ENCODE measurements at regions of chr7 and their contacts with region 1.

Region 1: GRCh38 chr7:7719236-7719635 is 829 bp upstream of the RPA3 start:
- DNase-seq: peak; percentile 77
- H3K4me3 Mint-ChIP-seq: no peak overlapping the region
- H3K27ac Mint-ChIP-seq: peak overlapping the region; percentile 63
- H3K4me1 Mint-ChIP-seq: peaks cover 19% of the 10 kb centered on the region
- H3K27me3 Mint-ChIP-seq: no peaks in the 10 kb centered on the region

Region 2: DNA sequence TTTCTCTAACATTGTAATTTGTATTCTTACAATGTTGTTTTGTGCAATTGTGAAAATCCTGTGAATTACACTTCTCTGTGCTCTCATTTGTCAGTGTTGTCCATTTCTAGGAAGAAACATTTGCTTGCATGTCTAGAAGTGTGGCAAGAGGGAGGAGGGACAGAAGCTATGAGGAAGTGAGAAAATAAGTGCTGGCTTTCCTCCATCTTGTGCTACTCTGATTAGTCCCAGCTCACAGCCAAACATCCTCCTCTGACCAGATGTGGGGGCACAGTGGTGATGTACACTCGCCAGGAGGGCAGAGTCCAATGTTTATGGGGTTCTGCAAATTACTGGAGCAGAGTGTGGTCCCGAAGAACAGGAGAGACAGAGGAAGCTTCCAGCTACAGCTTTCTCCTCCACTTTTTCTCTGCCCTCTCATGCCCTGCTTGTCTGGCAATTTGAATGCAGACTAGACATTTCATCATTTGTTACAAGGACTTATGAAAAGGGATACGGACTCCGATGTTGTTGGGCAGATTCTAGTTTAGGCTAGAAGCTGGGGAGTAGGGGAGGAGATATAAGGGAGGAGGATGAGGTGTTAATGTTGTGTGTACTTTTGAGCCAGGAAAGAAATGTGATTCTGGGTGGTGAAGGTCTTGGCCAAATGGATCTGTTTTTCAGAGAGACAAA is 667.9 kb before region 1 on chr7:
- CTCF ChIA-PET with region 1: no interaction called
- intact Hi-C with region 1: no loop called
- DNase-seq: no peak
- H3K4me3 Mint-ChIP-seq: no peak overlapping the region
- H3K27ac Mint-ChIP-seq: no peak overlapping the region
- H3K4me1 Mint-ChIP-seq: no peaks in the 10 kb centered on the region
- H3K27me3 Mint-ChIP-seq: no peaks in the 10 kb centered on the region

Region 3: DNA sequence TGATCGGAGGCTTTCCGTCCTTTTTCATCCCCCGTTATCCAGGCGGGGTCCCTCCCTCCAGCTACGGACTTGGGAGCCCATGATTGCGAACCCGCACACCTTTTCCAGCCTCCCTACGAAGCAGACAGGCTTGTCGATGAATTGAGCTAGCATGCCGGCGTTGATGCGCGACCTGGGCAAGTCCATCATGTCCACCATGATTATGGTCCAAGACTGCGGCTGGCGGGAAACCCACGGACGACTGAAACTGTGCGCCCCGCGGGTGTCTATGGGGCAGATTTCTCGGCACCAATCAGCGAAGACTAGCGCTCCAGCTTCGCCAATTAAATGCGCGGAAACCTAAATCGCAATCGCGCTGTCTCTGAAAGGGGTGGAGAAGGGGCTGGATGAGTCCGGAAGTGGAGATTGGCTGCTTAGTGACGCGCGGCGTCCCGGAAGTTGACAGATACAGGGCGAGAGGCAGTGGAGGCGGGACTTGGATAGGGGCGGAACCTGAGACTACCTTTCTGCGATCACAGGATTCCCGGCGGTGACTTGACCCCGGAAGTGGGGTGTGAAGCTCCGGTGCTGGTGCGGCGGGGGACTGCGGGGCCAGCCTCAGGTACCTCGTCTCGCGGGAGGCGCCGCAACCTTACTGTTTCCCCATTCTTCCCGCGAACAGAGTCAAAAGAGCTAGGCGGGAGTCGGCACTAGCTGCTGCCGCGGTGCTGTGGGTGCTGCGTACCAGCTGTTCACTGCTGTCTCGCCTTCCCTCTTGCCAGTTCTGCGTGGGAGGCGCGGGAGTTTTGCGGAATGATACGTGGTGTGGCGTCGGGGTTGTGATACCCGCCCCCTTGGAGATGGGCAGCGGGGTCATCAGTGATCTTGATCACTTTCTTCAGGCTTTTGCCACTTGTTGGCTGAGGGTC is 78.8 kb before region 1 on chr7 and contains the start of gene UMAD1:
- CTCF ChIA-PET with region 1: no interaction called
- intact Hi-C with region 1: loop called (anchors 1 kb)
- DNase-seq: peak; percentile 99
- H3K4me3 Mint-ChIP-seq: peak within 1 kb of the TSS; percentile 92
- H3K27ac Mint-ChIP-seq: peak within 1 kb of the TSS; percentile 98
- H3K4me1 Mint-ChIP-seq: peaks cover 41% of the 10 kb centered on the region
- H3K27me3 Mint-ChIP-seq: no peaks in the 10 kb centered on the region
- total RNA-seq, gene UMAD1: 13.8 to 14.3 TPM

Region 4: GRCh38 chr7:7681179-7681935 is 37.9 kb before region 1 on chr7:
- CTCF ChIA-PET with region 1: interaction called, 16 read pairs
- intact Hi-C with region 1: loop called (anchors 1 kb)
- DNase-seq: peak; percentile 66
- H3K4me3 Mint-ChIP-seq: no peak overlapping the region
- H3K27ac Mint-ChIP-seq: peak overlapping the region; percentile 9
- H3K4me1 Mint-ChIP-seq: peaks cover 36% of the 10 kb centered on the region
- H3K27me3 Mint-ChIP-seq: no peaks in the 10 kb centered on the region

Region 5: DNA sequence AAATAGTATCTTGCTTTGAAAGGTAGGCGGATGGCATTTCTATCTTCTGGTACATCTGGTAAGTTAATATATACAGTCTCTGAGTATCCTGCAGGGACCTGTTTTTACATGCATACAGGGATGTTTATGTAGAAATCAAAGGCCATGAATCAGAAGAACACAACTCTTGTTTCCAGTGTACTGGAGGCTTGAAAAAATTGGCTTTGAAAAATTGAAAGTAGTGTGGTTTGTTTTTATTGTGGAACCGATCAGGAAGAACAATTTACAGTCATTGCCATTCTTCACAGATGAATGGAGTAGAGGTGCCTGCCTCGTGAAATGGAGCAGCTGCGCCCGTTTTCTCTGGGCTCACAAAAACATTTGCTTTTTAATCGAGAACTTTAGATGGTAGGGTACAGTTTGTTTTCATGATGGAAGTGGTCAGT is 53.2 kb after region 1 on chr7:
- CTCF ChIA-PET with region 1: no interaction called
- intact Hi-C with region 1: loop called (anchors 1 kb)
- DNase-seq: peak; percentile 53
- H3K4me3 Mint-ChIP-seq: peak overlapping the region; percentile 69
- H3K27ac Mint-ChIP-seq: no peak overlapping the region
- H3K4me1 Mint-ChIP-seq: peaks cover 28% of the 10 kb centered on the region
- H3K27me3 Mint-ChIP-seq: no peaks in the 10 kb centered on the region

Region 6: GRCh38 chr7:8125680-8126444 is 406.6 kb after region 1 on chr7:
- CTCF ChIA-PET with region 1: no interaction called
- intact Hi-C with region 1: loop called (anchors 1 kb)
- DNase-seq: peak; percentile 86
- H3K4me3 Mint-ChIP-seq: peak overlapping the region; percentile 71
- H3K27ac Mint-ChIP-seq: peak overlapping the region; percentile 96
- H3K4me1 Mint-ChIP-seq: peaks cover 57% of the 10 kb centered on the region
- H3K27me3 Mint-ChIP-seq: no peaks in the 10 kb centered on the region

Region 7: DNA sequence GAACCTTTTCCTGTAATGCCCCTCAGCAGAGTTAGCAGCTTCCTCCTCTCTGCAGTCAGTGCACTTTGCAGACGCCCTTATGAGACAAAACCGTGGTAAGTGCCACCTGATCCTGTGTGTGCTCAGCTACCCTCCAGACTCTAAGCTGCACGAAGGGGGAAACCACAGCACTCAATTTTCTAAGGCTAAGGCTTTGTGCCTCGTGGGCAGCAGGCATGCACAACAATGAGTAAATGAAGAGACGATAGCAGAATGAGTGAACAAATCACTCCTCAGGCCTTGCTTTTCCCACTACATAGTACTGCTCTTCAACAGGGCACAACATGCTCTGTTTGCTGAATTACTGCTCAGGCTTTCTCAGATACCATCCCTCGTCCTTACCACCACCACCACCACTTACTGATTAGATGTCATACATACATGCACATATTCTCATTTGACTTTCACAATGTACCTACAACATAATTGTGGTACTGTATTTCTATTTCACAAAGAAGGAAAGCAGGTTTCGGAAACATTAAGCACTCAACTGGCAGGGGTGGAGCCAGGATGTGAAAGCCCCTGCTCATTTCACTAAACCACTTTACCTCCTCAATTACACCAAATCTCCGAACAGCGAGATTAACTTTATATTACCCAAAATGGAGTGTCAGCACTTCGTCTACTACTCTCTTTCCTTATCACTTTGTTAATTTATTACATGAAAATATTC is 457.3 kb after region 1 on chr7:
- CTCF ChIA-PET with region 1: no interaction called
- intact Hi-C with region 1: loop called (anchors 1 kb)
- DNase-seq: peak; percentile 78
- H3K4me3 Mint-ChIP-seq: peak overlapping the region; percentile 47
- H3K27ac Mint-ChIP-seq: peak overlapping the region; percentile 83
- H3K4me1 Mint-ChIP-seq: peaks cover 43% of the 10 kb centered on the region
- H3K27me3 Mint-ChIP-seq: no peaks in the 10 kb centered on the region